H1 (cell line): ENCODE measurements at regions of chr19 and their contacts with region 1.

Region 1: DNA sequence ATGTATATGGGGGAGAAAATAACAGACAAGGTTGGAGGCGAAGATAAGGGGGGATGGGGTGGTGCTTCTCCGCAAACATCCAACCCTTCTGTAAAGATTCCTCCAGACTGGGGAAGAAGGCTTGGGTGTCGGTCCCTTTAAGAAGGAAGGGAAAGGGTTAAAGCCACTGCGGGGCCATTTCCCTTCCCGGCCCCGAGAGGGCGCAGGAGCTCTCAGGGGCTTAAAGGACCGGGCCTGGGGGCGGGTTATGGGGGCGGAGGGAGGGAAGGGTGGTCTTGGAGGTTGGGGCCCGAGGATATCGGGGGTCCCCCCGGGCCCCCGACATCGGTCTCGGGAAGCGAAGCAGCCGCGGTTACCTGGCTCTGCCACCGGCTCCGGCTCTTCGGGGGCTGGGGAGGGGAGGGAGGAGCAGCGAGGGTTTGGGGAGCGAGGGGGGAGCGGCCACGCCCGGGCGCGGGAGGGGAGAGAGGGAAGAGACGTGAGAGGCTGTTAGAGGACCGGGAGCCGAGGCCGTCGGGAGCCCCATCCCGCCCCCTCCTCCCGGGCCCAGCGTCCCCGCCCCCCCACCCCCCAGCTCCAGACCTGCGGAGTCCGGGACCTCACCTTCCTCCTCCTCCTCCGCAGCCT is 2.8 kb downstream of the TNNT1 start:
- DNase-seq: peak in 1 of 2 experiments; percentile 80
- H3K4me3 ChIP-seq: peak overlapping the region; percentile 53 to 83 (median 60)
- H3K27ac ChIP-seq: no peak overlapping the region
- H3K4me1 ChIP-seq: peaks cover 6 to 24% (median 13%) of the 10 kb centered on the region in 4 experiments
- H3K27me3 ChIP-seq: no peaks in the 10 kb centered on the region
- CTCF ChIP-seq: peak; percentile 63 to 80 (median 73)
- EP300 ChIP-seq: peak in 1 of 2 experiments; percentile 36; a peak in 1 of 3 replicates
- POLR2A ChIP-seq: no peak; a peak in 1 of 3 replicates
- RAD21 ChIP-seq: peak; percentile 22 to 45; a peak in 3 of 4 replicates

Region 2: DNA sequence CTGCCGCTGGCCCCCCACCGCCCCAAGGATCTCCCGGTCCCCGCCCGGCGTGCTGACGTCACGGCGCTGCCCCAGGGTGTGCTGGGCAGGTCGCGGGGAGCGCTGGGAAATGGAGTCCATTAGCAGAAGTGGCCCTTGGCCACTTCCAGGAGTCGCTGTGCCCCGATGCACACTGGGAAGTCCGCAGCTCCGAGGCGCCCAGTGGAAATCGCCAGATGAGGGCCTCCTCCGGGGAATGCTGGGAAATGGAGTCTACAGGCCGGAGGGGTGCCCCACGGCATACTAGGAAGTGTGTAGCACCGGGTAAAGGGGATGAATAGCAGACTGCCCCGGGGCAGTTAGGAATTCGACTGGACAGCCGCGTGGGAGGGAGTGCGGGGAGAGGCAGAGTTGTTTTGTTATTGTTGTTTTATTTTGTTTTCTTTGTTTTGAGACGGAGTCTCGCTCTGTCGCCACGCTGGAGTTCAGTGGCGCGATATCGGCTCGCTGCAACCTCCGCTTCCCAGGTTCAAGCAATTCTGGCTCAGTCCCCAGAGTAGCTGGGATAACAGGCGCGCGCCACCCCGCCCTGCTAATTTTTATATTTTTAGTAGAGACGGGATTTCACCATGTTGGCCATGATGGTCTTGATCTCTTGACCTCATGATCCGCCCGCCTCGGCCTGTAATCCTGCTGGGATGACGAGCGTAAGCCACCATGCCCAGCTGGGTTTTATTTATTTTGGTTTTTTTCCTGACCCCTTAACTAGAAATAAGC is 28.4 kb before region 1 on chr19 and contains the start of gene PPP1R12C:
- CTCF ChIA-PET with region 1: interaction called, 6 read pairs
- POLR2A ChIA-PET with region 1: interaction called, 17 read pairs
- DNase-seq: peak; percentile 92 to 93
- H3K4me3 ChIP-seq: peak within 1 kb of the TSS; percentile 83 to 92 (median 88)
- H3K27ac ChIP-seq: 0 out of 2 replicates have a peak within 1 kb of the TSS, but pooled peaks have one; percentile 46
- H3K4me1 ChIP-seq: peaks cover 0 to 23% (median 17%) of the 10 kb centered on the region in 4 experiments; a peak in 5 of 7 replicates
- H3K27me3 ChIP-seq: no peaks in the 10 kb centered on the region
- CTCF ChIP-seq: no peak
- EP300 ChIP-seq: no peak; a peak in 1 of 3 replicates
- POLR2A ChIP-seq: no peak
- RAD21 ChIP-seq: no peak
- total RNA-seq, gene PPP1R12C: 71.5 and 88.8 TPM in 2 replicates

Region 3: GRCh38 chr19:55166530-55167268 is 20.5 kb after region 1 on chr19 and contains the start of gene DNAAF3:
- CTCF ChIA-PET with region 1: interaction called, 118 read pairs
- POLR2A ChIA-PET with region 1: interaction called, 9 read pairs
- DNase-seq: peak in 1 of 2 experiments; percentile 98
- H3K4me3 ChIP-seq: peak within 1 kb of the TSS; percentile 46 to 66 (median 54); a peak in 7 of 8 replicates
- H3K27ac ChIP-seq: peak within 1 kb of the TSS; percentile 85
- H3K4me1 ChIP-seq: peaks cover 0 to 4% (median 2%) of the 10 kb centered on the region in 4 experiments; a peak in 3 of 7 replicates
- H3K27me3 ChIP-seq: peaks cover 0 to 31% (median 12%) of the 10 kb centered on the region in 4 experiments; a peak in 5 of 7 replicates
- CTCF ChIP-seq: no peak
- EP300 ChIP-seq: peak in 1 of 2 experiments; percentile 100; a peak in 2 of 3 replicates
- POLR2A ChIP-seq: no peak
- RAD21 ChIP-seq: no peak
- total RNA-seq, gene DNAAF3: 5.4 and 5.7 TPM in 2 replicates

Region 4: GRCh38 chr19:55216461-55217198 is 70.4 kb after region 1 on chr19:
- CTCF ChIA-PET with region 1: interaction called, 15 read pairs
- POLR2A ChIA-PET with region 1: interaction called, 3 read pairs
- DNase-seq: peak; percentile 84 to 96
- H3K4me3 ChIP-seq: peak overlapping the region; percentile 56 to 83 (median 74)
- H3K27ac ChIP-seq: no peak overlapping the region
- H3K4me1 ChIP-seq: peaks cover 0 to 6% (median 2%) of the 10 kb centered on the region in 4 experiments; a peak in 1 of 7 replicates
- H3K27me3 ChIP-seq: no peaks in the 10 kb centered on the region
- CTCF ChIP-seq: no peak
- EP300 ChIP-seq: peak in 1 of 2 experiments; percentile 86; a peak in 2 of 3 replicates
- POLR2A ChIP-seq: peak in 1 of 2 experiments; percentile 51; a peak in 1 of 3 replicates
- RAD21 ChIP-seq: peak; percentile 24 to 37; a peak in 2 of 4 replicates